Activated CD8-positive, alpha-beta T cell treated with anti-CD3 and anti-CD28 coated beads, Interleukin-2, amount 10 ng/mL, durations not matched to agents 7 days and 5 days (primary cell): ENCODE measurements at regions of chr11 and their contacts with region 1.

Region 1: GRCh38 chr11:120303004-120303637 is 22.0 kb upstream of the TLCD5 start:
- DNase-seq: peak; percentile 84
- ATAC-seq: peak; percentile 91
- H3K4me3 Mint-ChIP-seq: no peak overlapping the region
- H3K27ac Mint-ChIP-seq: no peak overlapping the region
- H3K4me1 Mint-ChIP-seq: no peaks in the 10 kb centered on the region
- H3K27me3 Mint-ChIP-seq: peaks cover 28% of the 10 kb centered on the region

Region 2: GRCh38 chr11:120034881-120035630 is 268.1 kb before region 1 on chr11:
- CTCF ChIA-PET with region 1: no interaction called
- POLR2A ChIA-PET with region 1: no interaction called
- DNase-seq: no peak
- ATAC-seq: no peak
- H3K4me3 Mint-ChIP-seq: no peak overlapping the region
- H3K27ac Mint-ChIP-seq: no peak overlapping the region
- H3K4me1 Mint-ChIP-seq: no peaks in the 10 kb centered on the region
- H3K27me3 Mint-ChIP-seq: peaks cover 2% of the 10 kb centered on the region

Region 3: DNA sequence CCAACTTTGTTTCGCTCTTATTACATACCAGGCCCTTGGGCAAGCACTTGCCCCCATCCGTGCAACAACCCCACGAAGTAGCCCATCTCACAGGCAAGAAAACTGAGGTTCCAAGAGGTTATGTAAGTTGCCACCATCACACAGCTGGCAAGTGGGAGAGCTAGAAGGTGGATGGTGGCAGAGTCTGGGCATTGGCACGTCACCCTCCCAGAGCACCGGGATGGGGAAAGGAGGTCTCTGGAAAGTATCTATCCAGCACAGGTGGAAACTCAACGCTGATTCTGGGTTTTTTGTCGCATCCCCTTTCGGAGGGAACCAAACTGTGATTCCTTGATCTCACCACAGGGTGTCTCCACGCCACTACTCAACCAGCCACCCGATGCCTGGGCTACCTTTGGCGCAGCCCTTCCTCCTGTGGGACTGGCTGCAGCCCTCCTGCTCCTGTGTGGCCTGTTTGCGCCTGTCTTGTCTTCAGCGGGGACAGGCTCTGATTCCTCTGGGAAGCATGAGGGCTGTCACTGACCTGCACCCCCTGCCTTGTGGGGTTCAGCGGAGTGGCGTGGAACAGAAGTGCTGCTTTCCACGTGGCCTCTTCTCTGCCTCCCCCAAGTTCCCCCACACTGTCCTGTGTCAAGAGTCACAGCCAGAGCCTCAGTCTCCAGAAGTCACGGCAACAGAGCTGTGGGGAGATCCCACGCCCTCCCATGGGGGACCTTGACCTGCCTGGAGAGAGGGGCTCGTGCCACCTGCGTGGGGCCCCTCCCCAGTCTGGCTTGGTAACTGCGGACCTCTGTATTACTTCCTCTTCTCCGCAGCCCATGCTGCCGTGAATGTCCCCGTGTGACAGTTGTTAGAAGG is 130.8 kb before region 1 on chr11:
- CTCF ChIA-PET with region 1: interaction called, 30 read pairs
- POLR2A ChIA-PET with region 1: no interaction called
- DNase-seq: peak; percentile 70
- ATAC-seq: peak; percentile 59
- H3K4me3 Mint-ChIP-seq: no peak overlapping the region
- H3K27ac Mint-ChIP-seq: no peak overlapping the region
- H3K4me1 Mint-ChIP-seq: no peaks in the 10 kb centered on the region
- H3K27me3 Mint-ChIP-seq: peaks cover 56% of the 10 kb centered on the region

Region 4: GRCh38 chr11:120235024-120235861 is 67.9 kb before region 1 on chr11:
- CTCF ChIA-PET with region 1: interaction called, 344 read pairs
- POLR2A ChIA-PET with region 1: interaction called, 3 read pairs
- DNase-seq: peak; percentile 78
- ATAC-seq: peak; percentile 82
- H3K4me3 Mint-ChIP-seq: no peak overlapping the region
- H3K27ac Mint-ChIP-seq: no peak overlapping the region
- H3K4me1 Mint-ChIP-seq: peaks cover 5% of the 10 kb centered on the region
- H3K27me3 Mint-ChIP-seq: peaks cover 53% of the 10 kb centered on the region

Region 5: GRCh38 chr11:120258661-120259060 is 44.5 kb before region 1 on chr11:
- CTCF ChIA-PET with region 1: interaction called, 11 read pairs
- POLR2A ChIA-PET with region 1: interaction called, 4 read pairs
- DNase-seq: no peak
- ATAC-seq: no peak
- H3K4me3 Mint-ChIP-seq: no peak overlapping the region
- H3K27ac Mint-ChIP-seq: no peak overlapping the region
- H3K4me1 Mint-ChIP-seq: peaks cover 12% of the 10 kb centered on the region
- H3K27me3 Mint-ChIP-seq: peaks cover 70% of the 10 kb centered on the region

Region 6: GRCh38 chr11:120316842-120317688 is 13.9 kb after region 1 on chr11:
- CTCF ChIA-PET with region 1: interaction called, 10 read pairs
- POLR2A ChIA-PET with region 1: no interaction called
- DNase-seq: no peak
- ATAC-seq: no peak
- H3K4me3 Mint-ChIP-seq: no peak overlapping the region
- H3K27ac Mint-ChIP-seq: no peak overlapping the region
- H3K4me1 Mint-ChIP-seq: no peaks in the 10 kb centered on the region
- H3K27me3 Mint-ChIP-seq: peaks cover 36% of the 10 kb centered on the region